GM10248 (cell line): ENCODE measurements at regions of chr7 and their contacts with region 1.

Region 1: DNA sequence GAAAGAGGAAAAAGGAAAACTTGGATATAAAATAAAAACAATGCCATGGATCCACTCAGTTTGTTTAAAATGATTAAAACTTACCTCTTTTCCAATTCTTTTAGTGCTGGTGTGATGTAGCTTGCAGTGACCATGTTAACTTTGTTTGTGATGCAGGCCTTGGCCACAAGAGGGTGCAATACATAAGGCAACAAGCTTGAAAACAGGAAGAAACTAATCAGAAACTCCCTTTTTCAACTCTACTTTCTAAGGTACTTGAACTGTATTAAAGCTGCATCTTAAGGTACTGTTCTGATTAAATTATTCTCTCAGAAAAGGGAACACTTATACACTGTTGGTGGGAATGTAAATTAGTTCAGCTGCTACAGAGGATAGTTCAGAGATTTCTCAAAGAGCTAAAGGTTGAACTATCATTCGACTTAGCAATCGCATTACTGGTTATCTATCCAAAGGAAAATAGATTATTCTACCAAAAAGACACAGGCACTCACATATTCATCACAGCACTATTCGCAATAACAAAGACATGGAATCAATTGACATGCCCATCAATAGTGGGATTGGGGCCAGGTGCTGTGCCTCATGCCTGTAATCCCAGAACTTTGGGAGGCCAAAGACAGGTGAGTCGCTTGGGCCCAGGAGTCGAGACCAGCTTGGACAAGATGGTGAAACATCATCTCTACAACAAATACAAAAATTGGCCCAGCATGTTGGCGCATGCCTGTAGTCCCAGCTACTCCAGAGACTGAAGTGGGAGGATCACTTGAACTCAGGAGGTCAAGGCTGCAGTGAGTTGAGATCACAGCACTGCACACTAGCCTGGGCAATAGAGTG is 50.9 kb downstream of the AASS start:
- DNase-seq: peak; percentile 39
- CTCF ChIP-seq: peak; percentile 84

Region 2: DNA sequence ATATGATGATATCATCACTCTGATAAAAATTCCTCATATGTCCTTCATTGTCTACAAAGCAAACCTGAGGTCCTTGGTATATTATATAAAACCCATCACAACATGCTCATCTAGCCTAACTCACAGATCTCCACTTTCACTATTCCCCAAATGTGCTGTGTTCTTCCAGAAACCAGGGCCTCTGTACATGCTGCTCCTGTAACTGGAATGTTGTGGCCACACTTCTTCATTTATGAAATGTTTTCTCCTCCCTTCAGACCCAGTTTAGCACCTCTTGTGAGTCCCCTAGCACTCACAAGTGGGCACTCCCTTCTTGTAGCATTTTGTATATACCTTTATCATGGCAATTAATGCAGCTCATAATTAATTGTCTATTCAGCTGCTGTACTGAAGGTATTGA is 11.0 kb before region 1 on chr7:
- CTCF ChIA-PET with region 1: interaction called, 23 read pairs
- POLR2A ChIA-PET with region 1: no interaction called
- DNase-seq: no peak
- CTCF ChIP-seq: no peak